RWPE1 (cell line): ENCODE measurements at regions of chr13 and their contacts with region 1.

Region 1: DNA sequence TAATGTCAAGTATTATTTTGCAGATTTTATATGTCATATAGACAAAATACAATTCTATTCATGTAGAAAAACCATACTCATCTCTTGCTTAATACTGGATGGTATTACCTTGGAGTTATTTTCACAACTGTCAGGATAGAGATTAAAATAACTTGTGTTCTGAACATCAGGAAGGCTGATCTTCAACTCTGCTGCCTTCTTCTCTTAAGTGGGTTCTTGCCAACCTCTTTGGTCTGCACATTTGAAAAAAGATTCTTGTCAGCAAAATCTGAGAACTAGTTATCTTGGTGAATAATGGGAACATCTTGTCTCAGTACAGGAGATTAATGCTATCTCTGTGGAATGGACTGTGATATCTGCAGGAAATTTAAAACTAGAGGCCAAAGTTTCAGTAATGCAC is 95.2 kb upstream of the FAM216B start:
- DNase-seq: no peak
- H3K27ac ChIP-seq: no peak overlapping the region
- CTCF ChIP-seq: no peak

Region 2: GRCh38 chr13:41428155-41428554 is 1258.0 kb before region 1 on chr13:
- CTCF ChIA-PET with region 1: no interaction called
- POLR2A ChIA-PET with region 1: no interaction called
- DNase-seq: no peak
- H3K27ac ChIP-seq: no peak overlapping the region
- CTCF ChIP-seq: no peak

Region 3: GRCh38 chr13:42377640-42378382 is 308.4 kb before region 1 on chr13:
- CTCF ChIA-PET with region 1: interaction called, 11 read pairs
- POLR2A ChIA-PET with region 1: no interaction called
- DNase-seq: no peak
- H3K27ac ChIP-seq: no peak overlapping the region
- CTCF ChIP-seq: no peak

Region 4: DNA sequence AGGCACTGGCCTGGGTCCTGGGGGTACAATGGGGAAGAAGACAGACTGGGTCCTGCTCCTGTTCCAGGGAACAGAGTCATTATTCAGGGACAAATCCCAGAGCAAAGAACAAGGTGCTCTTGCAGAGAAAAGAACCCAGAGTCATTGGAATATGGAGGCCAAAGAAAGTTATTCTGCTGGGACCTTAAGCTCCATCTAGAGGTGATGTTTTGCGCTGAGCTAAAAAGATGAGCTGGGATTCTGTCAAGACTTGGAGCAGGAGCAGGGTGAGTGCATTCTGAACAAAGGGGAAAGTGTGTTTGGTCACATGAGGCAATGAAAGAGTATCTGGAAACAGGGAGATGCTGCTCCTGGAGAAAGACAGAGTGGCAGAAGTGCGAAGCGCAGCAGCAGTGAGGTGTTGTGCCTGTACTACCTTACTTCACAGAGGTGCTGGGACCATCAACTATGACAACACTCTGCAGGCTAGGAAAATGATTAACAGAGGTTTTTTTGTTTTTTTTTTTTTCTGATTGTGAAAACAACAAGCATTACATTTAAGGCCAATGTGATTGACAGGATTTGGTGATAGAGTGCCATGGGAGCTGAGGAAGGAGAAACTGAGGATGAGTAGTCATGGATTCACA is 207.5 kb before region 1 on chr13:
- CTCF ChIA-PET with region 1: no interaction called
- POLR2A ChIA-PET with region 1: no interaction called
- DNase-seq: no peak
- H3K27ac ChIP-seq: no peak overlapping the region
- CTCF ChIP-seq: no peak; the same call in 1 of the 2 replicates